ENCODE measurements at regions of chr11 and their contacts with region 1.

Region 1: GRCh38 chr11:27991731-27992130 is 116.2 kb downstream of the KIF18A start:
- DNase-seq: no peak
- ATAC-seq: no peak
- H3K4me3 ChIP-seq: no peak overlapping the region
- H3K27ac ChIP-seq: no peak overlapping the region
- H3K4me1 ChIP-seq: peaks cover 6% of the 10 kb centered on the region
- H3K27me3 ChIP-seq: no peaks in the 10 kb centered on the region
- CTCF ChIP-seq: no peak

Region 2: GRCh38 chr11:28269586-28269985 is 277.9 kb after region 1 on chr11:
- CTCF ChIA-PET with region 1: no interaction called
- POLR2A ChIA-PET with region 1: no interaction called
- intact Hi-C with region 1: no loop called
- DNase-seq: no peak
- ATAC-seq: no peak
- H3K4me3 ChIP-seq: no peak overlapping the region
- H3K27ac ChIP-seq: no peak overlapping the region
- H3K4me1 ChIP-seq: no peaks in the 10 kb centered on the region
- H3K27me3 ChIP-seq: no peaks in the 10 kb centered on the region
- CTCF ChIP-seq: no peak

Region 3: DNA sequence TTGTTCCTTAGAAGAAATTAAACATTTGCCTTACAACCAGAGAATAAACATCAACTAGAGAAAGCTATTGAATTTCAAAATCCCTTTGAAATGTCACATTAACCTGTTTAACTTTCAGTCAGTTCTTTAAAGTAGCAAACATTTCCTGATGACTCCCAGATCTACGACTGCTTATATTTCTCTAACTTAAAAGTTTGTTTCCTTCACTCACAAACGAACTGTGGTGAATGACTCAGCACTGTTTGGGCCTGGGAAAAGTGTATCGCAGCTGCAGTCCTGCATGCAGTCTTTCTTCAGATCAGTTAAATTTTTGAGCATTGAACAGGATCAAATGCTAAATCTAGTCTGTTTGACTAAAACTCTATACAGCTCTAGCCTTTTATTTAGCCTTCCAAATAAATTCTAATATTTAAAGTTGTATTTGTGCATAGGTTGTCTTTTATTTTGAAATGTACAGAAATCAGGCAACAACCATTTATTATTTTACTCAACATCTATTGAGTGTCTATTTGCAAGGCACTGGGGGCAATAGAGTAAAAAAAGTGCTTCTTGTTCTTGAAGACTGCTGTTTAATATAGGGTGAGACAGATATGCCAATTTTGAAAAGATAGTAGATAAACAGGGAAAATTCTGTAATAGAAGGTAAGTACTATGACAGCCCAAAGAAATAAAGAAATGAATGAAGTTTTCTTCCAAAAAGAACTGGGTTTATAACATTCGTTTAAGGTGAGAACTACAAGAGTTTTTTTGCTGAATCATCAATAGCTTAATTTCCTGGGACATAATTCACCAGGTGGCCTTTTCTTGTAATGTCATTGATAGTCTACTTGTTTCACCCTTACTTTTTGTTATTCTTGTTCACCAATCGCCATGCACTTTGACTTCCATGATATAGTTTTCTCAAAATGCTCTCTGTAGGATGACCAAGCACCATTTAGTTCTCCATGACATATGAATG is 351.8 kb after region 1 on chr11:
- CTCF ChIA-PET with region 1: no interaction called
- POLR2A ChIA-PET with region 1: interaction called, 13 read pairs
- intact Hi-C with region 1: no loop called
- DNase-seq: peak; percentile 77
- ATAC-seq: peak; percentile 95
- H3K4me3 ChIP-seq: no peak overlapping the region
- H3K27ac ChIP-seq: peak overlapping the region; percentile 71
- H3K4me1 ChIP-seq: peaks cover 31% of the 10 kb centered on the region
- H3K27me3 ChIP-seq: no peaks in the 10 kb centered on the region
- CTCF ChIP-seq: no peak

Measured in PC-3 (cell line).